PC-3 (cell line): ENCODE measurements at regions of chr11 and their contacts with region 1.

Region 1: DNA sequence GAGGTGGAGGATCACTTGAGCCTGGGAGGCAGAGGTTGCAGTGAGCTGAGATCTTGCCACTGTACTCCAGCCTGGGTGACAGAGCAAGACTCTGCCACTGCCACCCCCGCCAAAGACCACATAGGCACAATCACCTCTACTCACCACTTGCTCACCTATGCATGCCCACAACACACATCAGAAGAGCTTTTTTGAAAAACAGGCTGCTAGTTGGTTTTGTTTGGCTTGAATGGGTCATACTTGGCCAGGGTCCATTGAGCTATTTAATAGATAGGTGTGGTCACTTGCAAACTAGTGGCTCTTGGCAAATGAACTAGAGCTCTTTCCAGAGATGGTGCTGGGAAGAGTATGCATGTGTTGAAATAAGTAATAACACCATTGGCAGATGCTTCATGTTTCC is 80.1 kb downstream of the EMSY start:
- DNase-seq: peak; percentile 98
- ATAC-seq: peak; percentile 93
- H3K4me3 ChIP-seq: peak overlapping the region; percentile 35; the same call in 1 of the 2 replicates
- H3K27ac ChIP-seq: peak overlapping the region; percentile 95
- H3K4me1 ChIP-seq: peaks cover 42% of the 10 kb centered on the region
- H3K27me3 ChIP-seq: no peaks in the 10 kb centered on the region
- CTCF ChIP-seq: no peak

Region 2: DNA sequence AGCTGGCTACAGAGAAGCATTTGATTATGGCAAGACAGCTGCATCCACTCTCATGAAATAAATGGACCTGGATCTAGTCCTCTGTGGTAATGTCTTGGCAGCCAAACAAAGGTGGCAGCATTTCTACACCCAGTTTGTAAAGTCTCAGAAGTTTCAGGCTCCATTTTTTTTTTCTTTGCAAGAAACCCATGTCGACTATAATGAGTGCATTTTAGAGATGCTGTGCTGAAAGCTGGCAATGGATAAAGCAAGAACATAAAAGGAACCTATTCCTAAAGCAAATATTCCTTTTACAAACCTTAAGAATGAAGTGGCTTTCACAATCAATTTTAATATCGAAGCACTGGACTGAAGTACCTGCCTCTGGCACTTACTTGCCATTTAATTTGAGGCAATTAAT is 177.5 kb before region 1 on chr11:
- CTCF ChIA-PET with region 1: no interaction called
- POLR2A ChIA-PET with region 1: interaction called, 14 read pairs
- intact Hi-C with region 1: no loop called
- DNase-seq: no peak
- ATAC-seq: no peak
- H3K4me3 ChIP-seq: no peak overlapping the region
- H3K27ac ChIP-seq: no peak overlapping the region
- H3K4me1 ChIP-seq: no peaks in the 10 kb centered on the region
- H3K27me3 ChIP-seq: no peaks in the 10 kb centered on the region
- CTCF ChIP-seq: no peak

Region 3: DNA sequence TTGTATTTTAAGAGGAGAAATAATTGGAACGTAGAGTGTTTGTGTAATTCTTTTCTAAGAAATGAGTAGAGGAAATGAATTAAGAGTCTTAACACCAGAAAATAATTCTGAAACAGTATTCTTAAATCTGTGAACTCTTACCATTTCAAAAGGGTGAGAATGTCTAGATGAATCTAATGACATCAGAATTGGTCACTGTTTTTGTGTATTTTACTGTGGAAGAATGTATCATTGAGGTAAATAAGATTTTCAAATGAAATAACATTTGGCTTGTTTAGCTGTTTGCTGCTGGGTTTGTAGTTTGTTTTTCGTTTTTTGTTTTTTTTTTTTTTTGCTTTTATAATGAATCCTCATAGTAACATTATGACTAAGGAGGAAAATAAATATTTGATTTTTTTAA is 17.5 kb after region 1 on chr11:
- CTCF ChIA-PET with region 1: no interaction called
- POLR2A ChIA-PET with region 1: no interaction called
- intact Hi-C with region 1: loop called (anchors 1 kb)
- DNase-seq: peak; percentile 62
- ATAC-seq: peak; percentile 24
- H3K4me3 ChIP-seq: peak overlapping the region; percentile 22
- H3K27ac ChIP-seq: peak overlapping the region; percentile 93
- H3K4me1 ChIP-seq: peaks cover 33% of the 10 kb centered on the region
- H3K27me3 ChIP-seq: no peaks in the 10 kb centered on the region
- CTCF ChIP-seq: no peak

Region 4: DNA sequence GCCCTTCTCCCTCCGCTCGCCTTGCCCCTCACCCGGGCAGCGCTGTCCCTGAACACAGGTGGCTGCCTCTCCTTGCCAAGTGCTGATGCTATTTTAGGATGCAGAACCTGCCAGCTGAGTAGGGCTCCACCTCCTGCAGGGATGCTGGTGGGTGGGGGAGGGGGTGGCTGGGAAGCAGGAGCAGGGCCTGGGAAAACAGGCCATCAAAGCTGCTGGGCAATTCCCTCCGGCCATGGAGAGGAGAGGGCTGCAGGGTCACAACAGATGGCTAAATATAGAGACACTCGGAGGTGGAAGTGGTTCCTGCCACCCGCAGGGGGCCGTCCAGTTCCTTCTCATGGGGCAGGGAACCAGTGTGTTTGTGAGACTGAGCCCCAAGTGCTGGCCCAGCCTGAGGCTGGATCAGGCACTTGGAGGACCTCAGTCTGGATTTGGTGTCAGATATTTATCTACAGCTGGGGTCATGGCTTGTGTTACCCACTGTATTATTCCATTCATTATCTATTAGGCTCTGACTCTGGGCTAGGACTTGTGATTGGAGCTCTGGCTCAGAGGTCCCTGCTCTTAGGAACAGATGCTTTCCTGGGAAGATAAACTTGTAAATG is 86.1 kb after region 1 on chr11:
- CTCF ChIA-PET with region 1: no interaction called
- POLR2A ChIA-PET with region 1: no interaction called
- intact Hi-C with region 1: no loop called
- DNase-seq: no peak
- ATAC-seq: no peak; the same call in 1 of the 2 replicates
- H3K4me3 ChIP-seq: no peak overlapping the region
- H3K27ac ChIP-seq: no peak overlapping the region
- H3K4me1 ChIP-seq: no peaks in the 10 kb centered on the region
- H3K27me3 ChIP-seq: no peaks in the 10 kb centered on the region
- CTCF ChIP-seq: no peak

Region 5: DNA sequence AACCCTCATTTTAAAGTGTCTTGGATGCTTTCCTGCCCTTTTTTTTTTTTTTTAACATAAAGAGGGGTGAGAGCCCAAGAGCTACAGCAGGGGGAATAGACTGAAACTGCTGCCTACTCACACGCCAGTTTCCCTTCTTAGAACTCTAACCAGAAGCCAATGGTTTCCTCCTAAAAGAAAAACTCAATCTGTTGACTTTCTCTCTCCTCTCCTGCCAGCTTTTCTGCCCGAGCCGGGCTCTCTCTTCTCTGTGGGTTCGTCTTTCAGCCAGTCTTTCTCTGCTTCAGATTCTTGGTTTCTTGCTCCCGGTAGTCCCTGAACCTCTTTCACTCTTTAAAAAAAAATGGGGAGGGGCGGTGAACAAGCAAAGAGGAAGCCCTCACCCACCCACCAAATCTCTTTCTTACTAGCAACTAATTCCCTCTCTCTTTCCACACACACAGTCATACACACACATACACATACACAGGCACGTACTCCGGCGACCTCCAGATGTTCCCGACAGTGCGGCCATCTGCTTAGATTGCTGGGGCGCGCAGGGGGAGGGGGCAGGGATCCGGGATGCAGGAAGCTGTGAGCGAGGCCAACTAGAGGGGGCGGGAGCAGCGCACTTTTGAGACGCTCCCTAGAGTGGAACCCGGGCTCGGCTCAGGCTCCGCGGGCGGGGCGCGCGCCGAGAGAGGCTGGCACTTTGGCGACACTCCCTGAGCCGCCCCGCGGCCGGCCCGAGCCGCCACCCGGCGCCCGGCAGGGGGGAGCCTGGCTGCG is 257.8 kb after region 1 on chr11:
- CTCF ChIA-PET with region 1: no interaction called
- POLR2A ChIA-PET with region 1: interaction called, 11 read pairs
- intact Hi-C with region 1: no loop called
- DNase-seq: peak; percentile 89
- ATAC-seq: peak; percentile 66
- H3K4me3 ChIP-seq: peak overlapping the region; percentile 92
- H3K27ac ChIP-seq: peak overlapping the region; percentile 0; the same call in 1 of the 2 replicates
- H3K4me1 ChIP-seq: peaks cover 14% of the 10 kb centered on the region
- H3K27me3 ChIP-seq: no peaks in the 10 kb centered on the region
- CTCF ChIP-seq: no peak